ENCODE measurements at regions of chr1 and their contacts with region 1.

Region 1: DNA sequence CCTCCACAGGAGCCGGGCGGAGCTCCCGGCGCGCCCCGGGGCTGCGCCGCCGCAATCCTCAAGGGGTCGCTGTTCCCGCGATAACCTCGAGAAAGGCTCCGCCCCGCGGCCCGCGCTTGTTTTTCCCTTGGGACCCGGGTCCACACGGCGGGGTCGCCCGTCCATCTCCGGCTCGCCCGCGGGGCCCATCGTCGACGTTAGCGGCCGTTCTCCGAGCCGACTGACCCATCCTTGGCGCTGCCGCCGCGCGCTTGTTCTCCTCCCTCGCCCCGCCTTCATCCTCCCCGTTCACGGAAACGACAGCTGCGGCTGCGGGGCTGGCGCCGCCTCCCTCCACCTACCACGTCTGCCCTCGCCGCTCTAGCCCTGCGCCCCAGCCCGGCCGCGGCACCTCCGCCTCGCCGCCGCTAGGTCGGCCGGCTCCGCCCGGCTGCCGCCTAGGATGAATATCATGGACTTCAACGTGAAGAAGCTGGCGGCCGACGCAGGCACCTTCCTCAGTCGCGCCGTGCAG is at the start of gene SH3GLB1:
- DNase-seq: peak; percentile 91
- H3K4me3 Mint-ChIP-seq: peak within 1 kb of the TSS; percentile 100
- H3K27ac Mint-ChIP-seq: peak within 1 kb of the TSS; percentile 98
- H3K4me1 Mint-ChIP-seq: peaks cover 41% of the 10 kb centered on the region
- H3K27me3 Mint-ChIP-seq: no peaks in the 10 kb centered on the region
- total RNA-seq, gene SH3GLB1: 64.3 to 65.3 TPM

Region 2: DNA sequence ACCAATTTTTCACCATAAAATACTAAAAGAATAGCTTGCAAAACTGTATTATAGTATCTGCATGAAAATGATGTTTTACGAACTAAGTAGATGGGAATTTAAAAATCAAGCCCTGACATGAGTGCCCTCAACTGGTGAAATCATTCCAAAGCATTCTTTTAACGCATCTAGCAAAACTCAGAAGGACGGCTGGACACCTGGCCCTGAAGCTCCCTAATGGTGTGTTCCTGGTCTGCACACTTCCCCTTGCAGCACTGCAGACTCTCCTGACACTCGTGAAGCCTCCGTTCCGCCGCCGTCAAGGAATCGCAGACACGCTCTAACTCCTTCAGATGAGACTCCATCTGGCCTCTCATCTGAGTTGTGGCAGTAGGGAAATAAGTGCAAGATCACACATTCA is 348.3 kb before region 1 on chr1:
- CTCF ChIA-PET with region 1: no interaction called
- POLR2A ChIA-PET with region 1: no interaction called
- intact Hi-C with region 1: no loop called
- DNase-seq: no peak
- H3K4me3 Mint-ChIP-seq: no peak overlapping the region
- H3K27ac Mint-ChIP-seq: no peak overlapping the region
- H3K4me1 Mint-ChIP-seq: no peaks in the 10 kb centered on the region
- H3K27me3 Mint-ChIP-seq: no peaks in the 10 kb centered on the region

Region 3: GRCh38 chr1:86395771-86396497 is 308.6 kb before region 1 on chr1 and contains the start of gene ODF2L:
- CTCF ChIA-PET with region 1: interaction called, 8 read pairs
- POLR2A ChIA-PET with region 1: interaction called, 6 read pairs
- intact Hi-C with region 1: loop called (anchors 1 kb)
- DNase-seq: peak; percentile 94
- H3K4me3 Mint-ChIP-seq: peak within 1 kb of the TSS; percentile 97
- H3K27ac Mint-ChIP-seq: peak within 1 kb of the TSS; percentile 92
- H3K4me1 Mint-ChIP-seq: peaks cover 48% of the 10 kb centered on the region
- H3K27me3 Mint-ChIP-seq: no peaks in the 10 kb centered on the region
- total RNA-seq, gene ODF2L: 31.5 to 32.3 TPM

Region 4: GRCh38 chr1:86733340-86733739 is 28.8 kb after region 1 on chr1:
- CTCF ChIA-PET with region 1: interaction called, 13 read pairs
- POLR2A ChIA-PET with region 1: interaction called, 5 read pairs
- intact Hi-C with region 1: no loop called
- DNase-seq: no peak
- H3K4me3 Mint-ChIP-seq: no peak overlapping the region
- H3K27ac Mint-ChIP-seq: no peak overlapping the region
- H3K4me1 Mint-ChIP-seq: peaks cover 4% of the 10 kb centered on the region
- H3K27me3 Mint-ChIP-seq: no peaks in the 10 kb centered on the region

Region 5: DNA sequence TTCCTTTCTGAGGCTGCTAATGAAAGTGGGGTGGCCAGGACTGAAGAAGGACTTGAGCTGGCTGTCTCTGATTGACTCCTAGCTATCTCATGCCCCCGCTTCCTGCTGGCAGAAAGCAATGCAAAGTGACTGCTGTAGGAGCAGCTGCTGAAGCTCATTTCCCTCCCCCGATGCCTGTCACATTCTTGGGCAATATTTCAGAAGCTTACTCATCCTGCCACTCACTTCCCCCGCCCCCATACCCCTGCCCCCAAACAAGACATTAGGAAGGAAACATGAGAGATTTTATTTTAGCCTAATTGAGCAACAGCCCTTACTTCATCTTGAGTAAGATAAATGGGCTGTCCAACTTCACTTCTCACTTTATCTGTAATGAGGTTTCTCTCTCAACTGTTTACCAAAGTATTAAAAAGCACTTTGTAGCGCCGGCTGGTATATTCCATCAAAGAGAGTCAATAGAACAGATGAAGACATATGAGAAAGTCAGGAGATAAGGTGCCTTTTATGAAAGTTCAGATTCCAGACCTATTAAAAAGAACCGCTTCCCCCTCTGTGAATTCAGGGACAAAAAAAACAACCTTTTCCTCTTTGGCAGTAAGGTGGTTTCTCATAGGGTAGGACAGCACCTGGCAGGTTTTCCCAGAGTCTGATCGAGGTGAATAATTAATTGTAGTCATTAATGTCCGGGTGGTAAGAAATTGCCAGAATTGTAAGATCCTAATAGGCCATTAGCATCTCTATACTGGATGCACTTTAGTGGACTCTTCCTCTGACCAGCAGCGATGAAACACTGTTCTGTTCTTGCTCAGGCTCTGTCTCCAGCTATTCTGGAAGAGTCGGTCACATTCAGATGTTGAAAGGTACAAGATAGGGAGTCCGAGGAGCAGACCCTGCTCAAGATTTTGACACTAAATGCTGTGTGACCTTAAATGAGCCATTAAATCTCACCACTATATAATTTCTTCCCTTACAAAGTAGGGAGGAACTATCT is 70.1 kb after region 1 on chr1:
- CTCF ChIA-PET with region 1: interaction called, 3 read pairs
- POLR2A ChIA-PET with region 1: no interaction called
- intact Hi-C with region 1: loop called (anchors 2 kb)
- DNase-seq: peak; percentile 81
- H3K4me3 Mint-ChIP-seq: peak overlapping the region; percentile 14
- H3K27ac Mint-ChIP-seq: peak overlapping the region; percentile 18
- H3K4me1 Mint-ChIP-seq: peaks cover 15% of the 10 kb centered on the region
- H3K27me3 Mint-ChIP-seq: peaks cover 2% of the 10 kb centered on the region

Region 6: DNA sequence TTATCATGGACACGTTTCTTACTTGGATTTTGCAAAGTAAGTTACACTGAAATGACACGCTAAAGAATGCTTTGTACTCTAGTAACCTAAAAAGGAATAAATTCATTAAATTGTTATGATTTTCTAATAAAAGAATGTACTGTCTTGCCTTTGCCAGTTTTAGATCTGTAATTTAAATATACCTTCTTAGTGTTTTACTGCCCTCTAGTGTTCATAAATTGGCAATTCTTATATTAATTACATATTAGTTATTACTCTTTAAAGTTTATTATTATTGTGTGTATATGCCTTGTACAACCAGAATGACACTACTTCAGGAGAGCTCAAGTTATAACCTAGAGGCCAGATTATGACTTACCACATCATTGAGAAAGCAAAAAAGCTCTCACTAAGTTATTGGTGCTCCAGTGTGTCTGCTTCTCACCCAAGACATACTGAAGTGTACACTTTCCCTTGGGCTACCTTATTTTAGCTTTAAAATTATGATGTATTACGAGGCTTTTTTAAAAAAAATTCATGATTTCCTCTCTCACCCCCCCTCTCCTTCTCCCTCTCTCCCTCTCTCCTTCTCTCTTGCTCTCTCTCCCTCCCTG is 379.8 kb after region 1 on chr1:
- CTCF ChIA-PET with region 1: interaction called, 9 read pairs
- POLR2A ChIA-PET with region 1: no interaction called
- intact Hi-C with region 1: loop called (anchors 10 kb)
- DNase-seq: no peak
- H3K4me3 Mint-ChIP-seq: no peak overlapping the region
- H3K27ac Mint-ChIP-seq: no peak overlapping the region
- H3K4me1 Mint-ChIP-seq: peaks cover 8% of the 10 kb centered on the region
- H3K27me3 Mint-ChIP-seq: no peaks in the 10 kb centered on the region